AG04450 (cell line): ENCODE measurements at regions of chr15 and their contacts with region 1.

Region 1: DNA sequence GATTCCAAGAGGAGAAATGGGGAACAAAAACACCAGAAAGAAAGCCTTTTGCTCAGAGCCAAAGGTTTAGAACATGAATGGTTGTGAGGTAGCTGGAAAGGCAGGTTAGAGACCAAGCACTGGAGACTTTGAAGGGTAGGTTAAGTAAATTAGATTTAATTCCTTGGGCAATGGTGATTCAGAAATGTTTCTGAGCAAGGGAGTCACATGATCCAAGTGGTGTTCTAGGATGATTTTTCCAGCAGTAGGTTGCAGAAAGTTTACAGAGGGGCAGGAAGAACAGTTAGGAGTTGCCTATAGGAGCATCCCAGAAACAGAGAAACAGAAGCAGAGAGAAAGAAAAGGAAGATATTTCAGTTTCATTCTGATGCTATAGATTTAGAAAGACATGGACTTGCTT is 139.8 kb downstream of the WDR76 start:
- DNase-seq: no peak
- H3K4me3 ChIP-seq: no peak overlapping the region
- H3K27ac ChIP-seq: no peak overlapping the region
- H3K27me3 ChIP-seq: no peaks in the 10 kb centered on the region
- CTCF ChIP-seq: no peak

Region 2: GRCh38 chr15:43954181-43954621 is 12.4 kb before region 1 on chr15:
- CTCF ChIA-PET with region 1: no interaction called
- POLR2A ChIA-PET with region 1: no interaction called
- DNase-seq: no peak
- H3K4me3 ChIP-seq: no peak overlapping the region
- H3K27ac ChIP-seq: no peak overlapping the region
- H3K27me3 ChIP-seq: no peaks in the 10 kb centered on the region
- CTCF ChIP-seq: no peak

Region 3: DNA sequence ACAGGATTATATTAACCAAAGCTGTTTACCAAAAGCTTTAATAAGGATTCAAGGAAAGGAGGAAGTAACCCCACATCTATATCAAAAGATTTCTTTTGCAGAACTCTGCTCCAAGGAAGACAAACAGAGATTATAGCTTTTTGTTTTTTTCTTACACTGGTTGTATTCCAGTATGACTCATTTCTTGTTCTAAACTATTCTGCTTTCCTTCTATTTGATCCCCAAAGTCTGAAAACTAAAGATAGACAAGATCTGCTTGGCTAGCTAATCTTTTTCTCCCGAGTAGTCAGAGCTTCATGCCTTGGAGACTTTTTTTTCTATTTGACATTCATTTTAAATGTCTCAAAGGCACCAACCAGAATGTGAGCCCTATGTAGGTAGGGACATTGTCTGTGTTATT is 265.2 kb after region 1 on chr15:
- CTCF ChIA-PET with region 1: no interaction called
- POLR2A ChIA-PET with region 1: interaction called, 12 read pairs
- DNase-seq: no peak
- H3K4me3 ChIP-seq: no peak overlapping the region
- H3K27ac ChIP-seq: no peak overlapping the region
- H3K27me3 ChIP-seq: no peaks in the 10 kb centered on the region
- CTCF ChIP-seq: no peak